ENCODE measurements at regions of chr1 and their contacts with region 1.

Region 1: DNA sequence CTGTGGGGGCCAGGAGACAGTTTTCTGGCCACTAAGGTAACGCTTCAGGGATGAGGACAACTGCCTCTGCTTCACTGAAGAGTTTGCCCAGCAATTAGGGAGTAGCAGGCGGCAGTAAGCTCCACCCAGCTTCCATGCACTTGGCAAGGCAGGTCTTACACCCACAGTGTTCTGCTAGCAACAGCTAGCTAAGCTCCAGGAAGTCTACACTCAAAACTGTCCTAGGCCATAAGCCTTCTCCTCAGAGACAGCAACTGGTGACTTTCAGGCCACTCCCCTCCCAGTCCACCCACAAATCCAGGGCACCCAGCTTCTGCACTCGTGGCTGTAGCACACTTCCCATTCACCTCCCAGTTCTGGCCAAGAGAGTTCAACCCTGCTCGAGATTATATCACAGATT is 47.2 kb downstream of the KMO start:
- DNase-seq: no peak
- CTCF ChIP-seq: no peak

Region 2: GRCh38 chr1:241592273-241592958 is 13.0 kb after region 1 on chr1:
- CTCF ChIA-PET with region 1: interaction called, 10 read pairs
- POLR2A ChIA-PET with region 1: no interaction called
- DNase-seq: no peak
- CTCF ChIP-seq: no peak

Region 3: DNA sequence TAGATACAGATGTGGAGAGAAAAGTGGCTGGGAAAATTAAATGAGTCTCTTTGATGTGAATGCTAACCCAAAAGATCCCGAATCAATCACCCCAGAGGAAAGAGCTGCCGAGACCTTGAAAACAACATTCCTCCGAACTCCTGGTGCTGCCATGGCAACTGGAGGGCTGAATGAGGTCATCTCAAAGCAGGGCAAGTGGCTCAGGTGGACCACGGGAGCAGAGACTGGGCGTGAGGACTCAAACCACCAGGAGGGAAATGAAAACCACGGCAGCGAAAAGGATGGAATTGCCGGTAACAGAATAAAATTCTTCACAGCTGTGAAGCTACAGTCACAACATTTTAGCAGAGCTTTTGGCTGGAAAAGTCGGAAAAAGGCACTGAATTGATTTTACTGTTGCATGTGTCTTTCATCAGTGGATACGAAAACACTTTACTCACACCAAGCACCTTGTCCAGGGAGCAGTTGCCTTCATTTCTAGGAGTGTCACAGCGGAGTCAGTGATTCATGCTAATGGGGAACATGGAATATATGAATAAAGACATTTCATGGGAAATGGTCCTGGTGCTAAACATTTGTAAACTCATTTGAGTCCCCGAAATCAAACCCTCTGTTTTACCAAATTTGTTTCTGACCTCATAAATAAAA is 354.9 kb after region 1 on chr1:
- CTCF ChIA-PET with region 1: no interaction called
- POLR2A ChIA-PET with region 1: no interaction called
- DNase-seq: no peak
- CTCF ChIP-seq: no peak